BJ (cell line): ENCODE measurements at regions of chr4 and their contacts with region 1.

Region 1: DNA sequence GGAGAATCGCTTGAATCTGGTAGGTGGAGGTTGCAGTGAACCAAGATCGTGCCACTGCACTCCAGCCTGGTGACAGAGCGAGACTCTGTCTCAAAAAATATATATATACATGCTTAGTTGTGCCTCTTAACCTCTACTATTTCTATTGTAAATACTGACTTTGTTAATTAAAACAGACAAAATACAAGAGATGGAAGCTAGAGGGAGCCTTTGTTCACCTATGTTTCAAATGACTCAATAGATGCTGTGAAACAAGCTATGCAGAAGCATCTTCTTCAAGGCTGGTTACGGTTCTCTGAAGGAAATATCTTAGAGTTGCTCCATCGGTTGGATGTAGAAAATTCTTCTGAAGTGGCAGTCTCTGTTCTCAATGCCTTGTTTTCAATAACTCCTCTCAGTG is 6.2 kb downstream of the NCAPG start:
- DNase-seq: peak; percentile 37
- H3K4me3 ChIP-seq: no peak overlapping the region
- H3K27me3 ChIP-seq: no peaks in the 10 kb centered on the region
- CTCF ChIP-seq: peak; percentile 65

Region 2: DNA sequence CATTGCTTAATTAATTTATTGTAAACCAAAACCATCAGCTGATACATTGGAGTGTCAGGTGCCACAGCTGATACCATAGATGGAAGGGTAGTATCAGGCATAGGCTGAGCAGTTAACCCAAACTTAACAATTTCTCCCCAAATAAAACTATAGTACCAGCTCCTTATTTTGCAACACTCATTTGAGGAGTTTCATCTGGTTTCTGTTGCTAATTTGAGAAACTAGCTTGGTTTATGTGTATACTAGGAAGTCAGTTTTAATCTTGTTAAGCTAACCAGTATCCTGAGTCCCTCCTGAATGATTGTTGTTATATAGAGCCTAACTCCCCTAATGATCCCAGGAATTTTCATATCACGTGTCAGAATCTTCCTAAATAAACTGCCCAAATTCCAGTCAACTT is 19.2 kb before region 1 on chr4:
- CTCF ChIA-PET with region 1: interaction called, 3 read pairs
- POLR2A ChIA-PET with region 1: interaction called, 18 read pairs
- DNase-seq: no peak
- H3K4me3 ChIP-seq: no peak overlapping the region
- H3K27me3 ChIP-seq: no peaks in the 10 kb centered on the region
- CTCF ChIP-seq: no peak

Region 3: DNA sequence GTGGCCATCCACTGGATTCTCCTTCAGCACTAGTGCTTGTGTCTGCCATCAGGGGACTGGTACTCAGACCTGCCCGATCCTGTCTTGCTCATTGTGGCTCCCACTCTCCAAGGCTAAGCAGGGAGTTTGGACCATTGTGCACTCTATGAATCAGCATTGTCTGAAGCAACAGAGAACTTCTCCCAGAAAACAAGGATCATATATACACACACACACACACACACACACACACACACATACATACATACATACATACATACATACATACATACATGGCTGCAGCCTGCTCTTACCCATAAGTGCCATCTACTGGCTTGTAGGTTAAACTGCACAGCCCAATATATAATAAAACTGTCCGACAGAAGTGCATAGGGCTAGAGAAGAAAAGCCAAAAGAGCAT is 549.9 kb after region 1 on chr4:
- CTCF ChIA-PET with region 1: interaction called, 11 read pairs
- POLR2A ChIA-PET with region 1: no interaction called
- DNase-seq: no peak
- H3K4me3 ChIP-seq: no peak overlapping the region
- H3K27me3 ChIP-seq: no peaks in the 10 kb centered on the region
- CTCF ChIP-seq: peak; percentile 50